Left cardiac atrium (tissue), 4 donors: ENCODE measurements at regions of chr3 and their contacts with region 1.

Region 1: DNA sequence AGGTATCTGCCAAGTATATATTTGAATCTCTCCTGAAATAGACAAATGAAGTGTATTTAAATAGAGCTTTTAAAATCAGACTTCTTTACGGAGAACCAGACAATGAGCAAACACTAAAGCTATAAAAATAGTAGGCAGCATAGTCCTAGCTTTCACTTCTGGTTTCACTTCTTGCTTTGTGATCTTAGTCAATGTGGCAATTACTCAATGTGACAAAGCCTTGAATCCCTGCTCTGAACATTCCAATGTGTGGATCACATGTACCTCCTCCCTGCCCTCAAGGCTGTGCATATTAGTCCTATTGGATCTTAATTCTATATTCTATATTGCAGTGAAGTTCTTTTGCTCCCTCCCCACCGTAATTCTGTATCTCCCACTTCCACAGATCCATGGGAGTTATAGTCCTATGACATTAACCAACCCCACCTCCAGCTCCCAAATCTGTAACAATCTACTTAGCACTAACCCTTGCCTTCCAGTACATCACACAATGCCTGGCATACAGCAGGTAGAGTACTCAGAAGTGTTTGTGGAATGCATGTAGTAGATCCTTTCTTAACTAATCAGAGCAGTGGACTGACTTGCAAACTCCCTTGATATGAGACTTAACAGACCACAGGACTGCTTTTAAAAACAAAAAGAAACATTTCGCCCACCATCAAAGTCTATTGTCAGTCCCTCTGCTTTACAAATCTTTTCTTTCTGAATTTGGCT is 24.3 kb upstream of the CP start:
- DNase-seq: no peak
- ATAC-seq: peak; percentile 66 to 77

Region 2: GRCh38 chr3:149180057-149180573 is 65.8 kb before region 1 on chr3:
- intact Hi-C with region 1: loop called in 1 of 2 experiments (anchors 10 kb)
- DNase-seq: peak; percentile 90
- ATAC-seq: peak; percentile 94 to 99